Endothelial cell of umbilical vein (primary cell): ENCODE measurements at regions of chr16 and their contacts with region 1.

Region 1: GRCh38 chr16:85114909-85115567 is 2.8 kb upstream of the CIBAR2 start:
- DNase-seq: peak; percentile 86
- H3K4me3 ChIP-seq: no peak overlapping the region
- H3K27ac ChIP-seq: peak overlapping the region; percentile 9
- H3K4me1 ChIP-seq: no peaks in the 10 kb centered on the region
- H3K27me3 ChIP-seq: no peaks in the 10 kb centered on the region
- CTCF ChIP-seq: peak; percentile 98
- POLR2A ChIP-seq: no peak

Region 2: DNA sequence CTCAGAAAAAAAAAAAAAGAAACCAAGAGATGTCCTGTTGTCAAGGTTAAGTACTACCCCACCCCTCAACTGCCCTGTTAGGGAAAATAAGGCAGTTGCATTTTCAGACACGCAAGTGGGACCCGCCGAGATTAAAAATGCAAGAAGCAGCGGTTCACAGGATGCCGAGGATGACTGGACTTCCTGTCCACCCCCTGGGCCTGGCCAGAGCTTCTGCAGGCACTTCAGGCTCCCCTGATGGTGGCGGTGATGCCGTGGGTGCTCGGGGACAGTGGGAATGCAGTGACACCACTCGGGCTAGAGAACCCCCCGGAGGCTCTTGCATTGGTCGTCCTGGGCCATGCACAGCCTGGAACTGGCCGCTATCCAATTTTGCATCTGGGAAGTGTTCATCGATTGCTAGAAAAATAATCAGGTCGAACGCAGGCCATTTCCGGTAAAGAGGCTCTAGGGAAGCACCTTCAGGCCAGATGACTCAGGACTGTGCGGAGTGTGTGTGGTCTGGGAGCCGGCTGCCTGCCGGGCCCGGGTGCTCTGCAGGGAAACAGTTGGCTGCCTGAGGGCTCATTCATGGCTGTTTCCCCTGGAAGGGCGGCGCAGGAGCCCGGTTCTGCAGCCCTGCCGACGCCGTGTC is 308.7 kb before region 1 on chr16:
- CTCF ChIA-PET with region 1: no interaction called
- POLR2A ChIA-PET with region 1: no interaction called
- dilution Hi-C with region 1: no loop called
- intact Hi-C with region 1: no loop called
- DNase-seq: peak; percentile 80
- H3K4me3 ChIP-seq: peak overlapping the region in 1 of 3 experiments; percentile 28
- H3K27ac ChIP-seq: peak overlapping the region; percentile 41
- H3K4me1 ChIP-seq: peaks cover 19% of the 10 kb centered on the region
- H3K27me3 ChIP-seq: peaks cover 2 to 6% of the 10 kb centered on the region in 2 experiments
- CTCF ChIP-seq: no peak
- POLR2A ChIP-seq: no peak

Region 3: GRCh38 chr16:85104821-85105391 is 10.1 kb before region 1 on chr16:
- CTCF ChIA-PET with region 1: interaction called, 13 read pairs
- POLR2A ChIA-PET with region 1: no interaction called
- dilution Hi-C with region 1: no loop called
- intact Hi-C with region 1: no loop called
- DNase-seq: no peak
- H3K4me3 ChIP-seq: no peak overlapping the region
- H3K27ac ChIP-seq: no peak overlapping the region
- H3K4me1 ChIP-seq: no peaks in the 10 kb centered on the region
- H3K27me3 ChIP-seq: no peaks in the 10 kb centered on the region
- CTCF ChIP-seq: no peak
- POLR2A ChIP-seq: no peak

Region 4: GRCh38 chr16:85162478-85163277 is 47.6 kb after region 1 on chr16:
- CTCF ChIA-PET with region 1: interaction called, 16 read pairs
- POLR2A ChIA-PET with region 1: no interaction called
- dilution Hi-C with region 1: no loop called
- intact Hi-C with region 1: no loop called
- DNase-seq: peak; percentile 46
- H3K4me3 ChIP-seq: no peak overlapping the region
- H3K27ac ChIP-seq: no peak overlapping the region
- H3K4me1 ChIP-seq: peaks cover 10% of the 10 kb centered on the region
- H3K27me3 ChIP-seq: no peaks in the 10 kb centered on the region
- CTCF ChIP-seq: no peak
- POLR2A ChIP-seq: no peak

Region 5: GRCh38 chr16:85234310-85235204 is 119.5 kb after region 1 on chr16:
- CTCF ChIA-PET with region 1: interaction called, 10 read pairs
- POLR2A ChIA-PET with region 1: no interaction called
- dilution Hi-C with region 1: no loop called
- intact Hi-C with region 1: no loop called
- DNase-seq: peak; percentile 69
- H3K4me3 ChIP-seq: peak overlapping the region in 2 of 3 experiments; percentile 49 to 56
- H3K27ac ChIP-seq: peak overlapping the region; percentile 40
- H3K4me1 ChIP-seq: peaks cover 14% of the 10 kb centered on the region
- H3K27me3 ChIP-seq: no peaks in the 10 kb centered on the region
- CTCF ChIP-seq: no peak
- POLR2A ChIP-seq: no peak

Region 6: DNA sequence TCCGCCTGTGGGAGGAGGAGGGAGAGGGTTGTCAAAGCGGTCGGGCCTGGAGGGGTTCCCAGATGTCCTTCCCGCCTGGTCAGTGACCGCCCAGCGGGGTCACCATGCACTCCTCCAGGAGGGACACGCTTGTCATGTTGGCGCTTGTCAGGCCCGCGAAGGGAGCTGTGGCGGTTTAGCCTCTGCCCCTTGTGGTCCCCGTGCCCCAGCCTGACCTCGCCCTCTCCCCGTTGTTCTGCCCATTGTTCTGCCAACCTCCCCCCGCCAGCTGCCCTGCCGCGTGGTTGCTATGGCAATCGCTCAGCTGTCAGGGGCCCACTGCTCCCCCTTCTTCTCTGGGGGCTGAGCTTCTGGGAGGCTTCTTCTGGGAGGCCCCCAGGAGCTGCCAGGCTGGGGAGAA is 143.6 kb after region 1 on chr16:
- CTCF ChIA-PET with region 1: interaction called, 34 read pairs
- POLR2A ChIA-PET with region 1: no interaction called
- dilution Hi-C with region 1: no loop called
- intact Hi-C with region 1: loop called (anchors 2 kb)
- DNase-seq: no peak
- H3K4me3 ChIP-seq: no peak overlapping the region
- H3K27ac ChIP-seq: no peak overlapping the region
- H3K4me1 ChIP-seq: no peaks in the 10 kb centered on the region
- H3K27me3 ChIP-seq: no peaks in the 10 kb centered on the region
- CTCF ChIP-seq: no peak
- POLR2A ChIP-seq: no peak

Region 7: DNA sequence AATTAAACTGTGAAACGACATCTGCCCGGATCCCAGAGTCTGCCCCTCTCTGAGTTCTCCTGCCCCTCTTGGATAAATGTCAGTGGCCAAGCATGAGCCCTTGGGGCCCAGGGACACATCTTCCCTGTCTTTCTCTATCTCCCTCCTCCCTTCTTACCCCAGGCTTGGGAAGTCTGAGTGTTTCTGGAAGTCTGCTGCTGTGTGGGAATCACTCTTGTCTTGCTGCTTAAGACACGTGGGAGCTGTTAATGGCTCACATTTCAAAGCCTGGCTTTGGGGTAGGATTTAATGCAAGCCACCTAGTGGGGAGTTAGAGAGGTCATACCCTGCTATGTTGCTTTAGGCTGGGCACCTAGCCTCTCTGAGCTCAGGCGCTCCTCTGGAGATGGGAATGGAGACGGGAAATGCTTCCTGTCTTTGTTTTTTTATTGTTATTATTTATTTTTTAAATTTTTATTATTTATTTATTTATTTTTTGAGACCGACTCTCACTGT is 215.7 kb after region 1 on chr16:
- CTCF ChIA-PET with region 1: interaction called, 10 read pairs
- POLR2A ChIA-PET with region 1: no interaction called
- dilution Hi-C with region 1: no loop called
- intact Hi-C with region 1: loop called (anchors 10 kb)
- DNase-seq: no peak
- H3K4me3 ChIP-seq: no peak overlapping the region
- H3K27ac ChIP-seq: no peak overlapping the region
- H3K4me1 ChIP-seq: peaks cover 30% of the 10 kb centered on the region
- H3K27me3 ChIP-seq: no peaks in the 10 kb centered on the region
- CTCF ChIP-seq: peak; percentile 30 to 40
- POLR2A ChIP-seq: no peak

Region 8: GRCh38 chr16:85610508-85611332 is 495.7 kb after region 1 on chr16:
- CTCF ChIA-PET with region 1: interaction called, 26 read pairs
- POLR2A ChIA-PET with region 1: no interaction called
- dilution Hi-C with region 1: no loop called
- intact Hi-C with region 1: loop called (anchors 1 kb)
- DNase-seq: peak; percentile 53
- H3K4me3 ChIP-seq: no peak overlapping the region
- H3K27ac ChIP-seq: no peak overlapping the region
- H3K4me1 ChIP-seq: peaks cover 12% of the 10 kb centered on the region
- H3K27me3 ChIP-seq: peaks cover 0 to 2% of the 10 kb centered on the region in 2 experiments
- CTCF ChIP-seq: peak; percentile 98 to 99
- POLR2A ChIP-seq: no peak